Testis (tissue), 5 donors: ENCODE measurements at regions of chr2 and their contacts with region 1.

Region 1: GRCh38 chr2:235588750-235589149 is 94.9 kb downstream of the AGAP1 start:
- DNase-seq: peak; percentile 40
- H3K4me3 ChIP-seq: no peak overlapping the region
- H3K27ac ChIP-seq: no peak overlapping the region
- H3K4me1 ChIP-seq: no peaks in the 10 kb centered on the region
- H3K27me3 ChIP-seq: no peaks in the 10 kb centered on the region
- CTCF ChIP-seq: no peak
- POLR2A ChIP-seq: no peak

Region 2: DNA sequence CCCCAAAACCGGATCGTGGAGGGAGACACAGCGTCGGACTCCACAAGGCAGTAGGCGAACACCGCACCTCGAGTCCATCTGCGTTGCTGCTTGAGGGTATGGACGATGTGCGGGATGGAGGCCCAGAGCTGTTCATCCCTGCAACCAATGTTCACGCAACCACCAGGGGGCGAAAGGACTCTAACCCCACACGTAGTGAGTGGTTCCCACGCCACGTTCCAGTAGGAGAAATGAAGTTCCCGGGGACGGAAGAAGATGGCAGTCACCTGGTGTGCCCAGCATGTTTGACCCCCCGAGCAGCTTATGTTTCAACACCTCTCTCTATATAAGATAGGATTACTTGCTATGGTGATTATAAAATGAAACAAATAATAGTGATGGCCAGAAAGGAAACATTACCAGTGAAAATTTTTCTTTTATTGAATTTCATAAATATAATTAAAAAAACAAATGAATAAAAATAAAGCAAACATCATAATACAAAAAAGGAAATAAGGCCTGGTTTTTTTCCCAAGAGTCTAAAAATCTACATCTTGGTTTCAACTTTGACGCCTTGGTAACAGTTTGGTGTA is 452.7 kb before region 1 on chr2:
- intact Hi-C with region 1: loop called (anchors 10 kb)
- DNase-seq: peak; percentile 94
- H3K4me3 ChIP-seq: no peak overlapping the region
- H3K27ac ChIP-seq: no peak overlapping the region
- H3K4me1 ChIP-seq: no peaks in the 10 kb centered on the region
- H3K27me3 ChIP-seq: no peaks in the 10 kb centered on the region
- CTCF ChIP-seq: peak; percentile 70 to 83 (median 77)
- POLR2A ChIP-seq: no peak

Region 3: DNA sequence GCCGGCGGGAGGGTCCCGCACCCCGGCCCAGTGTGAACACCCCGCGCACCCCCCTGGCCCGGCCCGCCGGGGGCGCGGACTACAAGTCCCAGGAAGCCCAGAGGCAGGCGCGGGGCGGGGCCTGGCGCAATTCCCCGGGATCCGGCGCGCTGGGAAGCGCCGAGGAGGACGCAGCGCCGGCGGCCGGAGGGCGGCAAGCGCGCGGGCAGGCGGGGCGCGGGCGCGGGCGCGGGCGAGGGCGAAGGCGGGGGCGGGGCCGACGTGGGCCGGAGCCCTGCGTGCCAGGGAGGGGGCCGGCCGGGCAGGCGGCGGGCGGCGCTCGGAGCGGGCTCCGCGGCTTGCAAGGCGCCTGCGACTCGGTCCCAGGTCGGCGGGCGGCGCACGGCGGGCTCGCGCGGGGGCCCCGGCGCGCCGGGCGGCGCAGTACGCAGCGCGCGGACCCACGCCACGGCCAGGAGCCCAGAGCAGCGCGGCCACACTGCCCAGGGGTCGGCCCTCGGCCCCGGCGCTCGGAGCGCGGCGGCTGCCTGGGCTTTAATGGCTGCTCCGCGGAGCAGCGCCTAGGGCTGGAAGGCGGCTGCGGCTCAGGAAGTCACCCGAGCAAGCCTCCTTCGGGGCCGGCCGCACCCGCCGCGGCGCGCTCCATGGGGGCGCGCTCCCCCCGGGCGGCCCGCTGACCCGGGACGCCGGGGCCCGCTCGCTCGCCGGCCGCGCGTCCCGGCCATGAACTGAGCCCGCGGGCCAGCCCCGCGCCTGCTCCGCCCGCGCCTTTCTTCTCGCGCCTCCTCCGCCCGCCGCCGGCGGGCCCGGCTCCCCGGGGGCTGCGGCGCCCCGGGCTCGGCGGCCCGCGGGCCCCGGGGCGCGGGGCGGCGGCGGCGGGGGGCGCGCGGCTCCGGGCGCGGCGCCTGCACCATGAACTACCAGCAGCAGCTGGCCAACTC is 94.7 kb before region 1 on chr2 and contains the start of gene AGAP1:
- intact Hi-C with region 1: no loop called
- DNase-seq: peak; percentile 92
- H3K4me3 ChIP-seq: peak within 1 kb of the TSS; percentile 58 to 68
- H3K27ac ChIP-seq: peak within 1 kb of the TSS in 1 of 2 donors; percentile 68
- H3K4me1 ChIP-seq: peaks cover 10% of the 10 kb centered on the region
- H3K27me3 ChIP-seq: no peaks in the 10 kb centered on the region
- CTCF ChIP-seq: no peak
- POLR2A ChIP-seq: no peak
- total RNA-seq, gene AGAP1: 40.7 to 45.5 TPM

Region 4: GRCh38 chr2:236562434-236562833 is 973.7 kb after region 1 on chr2:
- intact Hi-C with region 1: no loop called
- DNase-seq: peak; percentile 42
- H3K4me3 ChIP-seq: no peak overlapping the region
- H3K27ac ChIP-seq: no peak overlapping the region
- H3K4me1 ChIP-seq: peaks cover 7% of the 10 kb centered on the region
- H3K27me3 ChIP-seq: no peaks in the 10 kb centered on the region
- CTCF ChIP-seq: peak; percentile 68 to 75 (median 73)
- POLR2A ChIP-seq: no peak